ENCODE measurements at regions of chr22 and their contacts with region 1.

Region 1: GRCh38 chr22:46212195-46212594 is 37.9 kb downstream of the CDPF1 start:
- DNase-seq: no peak

Region 2: DNA sequence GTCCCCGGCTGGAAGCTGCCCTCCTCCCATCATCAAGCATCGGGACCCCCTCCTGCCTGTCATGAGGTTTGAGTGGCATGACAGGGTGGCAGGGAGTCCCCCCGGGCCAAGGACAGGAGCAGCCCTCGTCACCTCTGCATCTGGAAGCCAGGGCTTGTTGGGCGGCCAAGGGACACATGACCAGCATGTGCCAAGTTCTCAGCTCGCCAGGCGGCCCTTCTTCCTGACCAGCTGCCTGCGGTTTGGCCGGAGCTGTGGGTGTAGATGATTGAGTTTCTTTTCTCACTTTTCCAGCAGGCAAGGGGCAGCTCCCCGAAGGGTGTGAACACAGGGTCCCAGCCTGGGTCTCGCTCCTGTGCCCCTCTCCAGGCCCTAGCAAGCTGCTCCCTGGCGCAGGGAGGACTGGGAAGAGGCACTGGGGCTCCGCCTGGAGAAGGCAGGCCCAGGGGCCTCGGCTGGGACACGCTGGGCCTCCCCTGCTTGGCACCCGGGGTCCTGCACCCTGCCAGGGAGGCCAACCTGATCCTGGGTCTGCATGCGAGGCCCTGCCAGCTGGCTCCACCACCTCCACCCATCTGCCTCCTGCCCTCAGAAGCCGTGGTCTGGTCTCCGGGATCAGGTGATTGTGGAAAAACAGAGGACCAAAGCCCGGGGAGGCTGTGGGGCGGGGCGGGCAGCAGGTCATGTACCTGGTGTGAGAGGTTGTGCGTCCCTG is 1446.5 kb before region 1 on chr22:
- intact Hi-C with region 1: no loop called
- DNase-seq: no peak

Region 3: DNA sequence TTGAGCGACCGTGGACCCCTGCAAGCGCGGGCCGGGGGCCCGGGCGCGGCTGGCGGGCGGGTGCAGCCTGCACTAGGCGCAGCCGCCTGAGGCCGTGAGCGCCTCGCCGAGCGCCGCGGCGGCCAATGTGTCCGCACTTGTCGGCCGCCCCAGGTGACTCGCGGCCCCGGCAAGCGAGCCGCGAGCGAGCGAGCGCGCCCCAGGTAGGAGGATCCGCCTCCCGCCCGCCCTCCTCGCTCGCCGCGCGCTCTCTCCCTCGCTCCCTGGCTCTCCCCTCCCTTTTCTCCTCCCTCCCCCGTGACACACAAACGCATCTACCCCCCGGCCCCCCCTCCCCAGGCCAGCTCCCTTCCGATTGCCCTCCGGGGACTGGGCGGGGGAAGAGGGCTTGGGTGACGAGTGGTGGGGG is 235.2 kb before region 1 on chr22 and contains the start of gene WNT7B:
- intact Hi-C with region 1: no loop called
- DNase-seq: no peak
- total RNA-seq, gene WNT7B: not detected

Region 4: DNA sequence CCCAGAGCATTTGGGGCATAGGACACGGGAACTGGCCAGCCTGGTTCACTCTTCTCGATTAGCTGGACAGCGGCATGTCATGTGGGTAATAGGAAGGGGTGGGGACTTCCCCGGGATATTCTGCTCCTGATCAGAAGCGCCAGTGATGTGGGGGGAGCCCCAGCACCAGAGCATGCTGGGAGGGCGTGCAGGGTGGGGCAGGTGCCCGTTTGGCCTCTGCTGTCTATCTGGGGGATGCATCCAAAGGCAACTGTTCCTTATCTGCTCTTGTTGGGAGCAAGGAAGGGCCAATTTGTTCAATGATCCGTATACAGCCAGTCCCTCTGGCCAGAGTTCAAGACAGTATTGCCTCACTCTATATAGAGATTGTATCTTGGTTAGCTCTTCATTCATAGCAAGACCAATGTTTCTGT is 18.3 kb before region 1 on chr22:
- intact Hi-C with region 1: no loop called
- DNase-seq: no peak

Region 5: DNA sequence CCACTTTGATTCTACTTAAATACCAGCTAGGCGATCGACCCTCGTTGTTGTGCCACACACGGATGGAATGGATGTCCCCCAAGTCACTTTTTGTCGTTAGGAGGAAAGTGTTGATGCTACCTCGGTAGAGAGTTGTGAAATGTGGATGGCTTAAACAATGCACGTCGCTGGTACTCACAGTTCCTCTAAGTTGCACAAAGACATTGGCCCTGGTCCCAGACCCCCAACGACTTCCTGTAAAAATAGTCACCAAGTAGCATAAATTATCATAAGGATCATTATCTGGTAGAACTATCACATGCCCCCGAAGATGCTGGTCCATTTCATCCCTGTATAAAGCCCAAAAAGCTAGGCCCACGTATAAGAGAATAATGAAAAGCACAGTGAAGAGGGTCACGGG is 47.2 kb after region 1 on chr22:
- intact Hi-C with region 1: loop called in 1 of 2 experiments (anchors 1 kb)
- DNase-seq: peak; percentile 84